ENCODE measurements at regions of chr15 and their contacts with region 1.

Region 1: GRCh38 chr15:49876401-49877038 is 242.5 kb downstream of the ATP8B4 start:
- DNase-seq: peak; percentile 38
- H3K4me3 ChIP-seq: no peak overlapping the region
- H3K27ac ChIP-seq: no peak overlapping the region
- H3K4me1 ChIP-seq: peaks cover 8% of the 10 kb centered on the region
- H3K27me3 ChIP-seq: no peaks in the 10 kb centered on the region
- CTCF ChIP-seq: peak; percentile 39 to 69

Region 2: GRCh38 chr15:50003786-50004334 is 127.3 kb after region 1 on chr15:
- CTCF ChIA-PET with region 1: no interaction called
- dilution Hi-C with region 1: no loop called
- in situ Hi-C with region 1: no loop called
- intact Hi-C with region 1: loop called (anchors 1 kb)
- DNase-seq: peak; percentile 70
- H3K4me3 ChIP-seq: no peak overlapping the region
- H3K27ac ChIP-seq: no peak overlapping the region
- H3K4me1 ChIP-seq: no peaks in the 10 kb centered on the region
- H3K27me3 ChIP-seq: no peaks in the 10 kb centered on the region
- CTCF ChIP-seq: peak; percentile 76 to 78

Region 3: GRCh38 chr15:50051803-50052419 is 175.4 kb after region 1 on chr15:
- CTCF ChIA-PET with region 1: interaction called, 5 read pairs
- dilution Hi-C with region 1: no loop called
- in situ Hi-C with region 1: no loop called
- intact Hi-C with region 1: loop called (anchors 5 kb)
- DNase-seq: peak; percentile 67
- H3K4me3 ChIP-seq: no peak overlapping the region
- H3K27ac ChIP-seq: no peak overlapping the region
- H3K4me1 ChIP-seq: no peaks in the 10 kb centered on the region
- H3K27me3 ChIP-seq: no peaks in the 10 kb centered on the region
- CTCF ChIP-seq: peak; percentile 63 to 77